Colonic mucosa (tissue), 4 donors: ENCODE measurements at regions of chr4 and their contacts with region 1.

Region 1: DNA sequence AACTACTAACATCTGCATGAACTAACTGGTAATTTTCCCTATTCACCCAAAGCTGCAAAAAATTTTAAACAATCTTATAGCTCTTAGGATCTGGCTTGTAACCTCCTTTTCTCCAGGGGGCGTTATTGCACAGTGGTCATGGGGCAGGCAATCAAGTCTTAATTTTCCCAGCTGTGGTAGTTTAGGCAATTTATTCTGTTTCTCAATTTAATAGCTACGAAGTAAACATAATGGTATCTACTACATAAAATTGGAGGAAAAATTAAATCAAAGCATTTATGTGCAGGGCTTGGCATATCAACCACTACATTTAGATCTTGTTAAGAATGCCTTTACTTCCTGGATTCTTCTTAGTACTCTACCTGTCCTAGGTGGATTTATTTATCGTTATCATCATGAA is 137.4 kb upstream of the GUCY1A1 start:
- DNase-seq: no peak
- H3K4me3 ChIP-seq: no peak overlapping the region
- H3K27ac ChIP-seq: no peak overlapping the region
- H3K4me1 ChIP-seq: no peaks in the 10 kb centered on the region
- H3K27me3 ChIP-seq: no peaks in the 10 kb centered on the region
- CTCF ChIP-seq: no peak

Region 2: GRCh38 chr4:155433636-155434360 is 95.5 kb before region 1 on chr4:
- intact Hi-C with region 1: no loop called
- DNase-seq: no peak
- H3K4me3 ChIP-seq: no peak overlapping the region
- H3K27ac ChIP-seq: no peak overlapping the region
- H3K4me1 ChIP-seq: no peaks in the 10 kb centered on the region
- H3K27me3 ChIP-seq: no peaks in the 10 kb centered on the region
- CTCF ChIP-seq: no peak

Region 3: DNA sequence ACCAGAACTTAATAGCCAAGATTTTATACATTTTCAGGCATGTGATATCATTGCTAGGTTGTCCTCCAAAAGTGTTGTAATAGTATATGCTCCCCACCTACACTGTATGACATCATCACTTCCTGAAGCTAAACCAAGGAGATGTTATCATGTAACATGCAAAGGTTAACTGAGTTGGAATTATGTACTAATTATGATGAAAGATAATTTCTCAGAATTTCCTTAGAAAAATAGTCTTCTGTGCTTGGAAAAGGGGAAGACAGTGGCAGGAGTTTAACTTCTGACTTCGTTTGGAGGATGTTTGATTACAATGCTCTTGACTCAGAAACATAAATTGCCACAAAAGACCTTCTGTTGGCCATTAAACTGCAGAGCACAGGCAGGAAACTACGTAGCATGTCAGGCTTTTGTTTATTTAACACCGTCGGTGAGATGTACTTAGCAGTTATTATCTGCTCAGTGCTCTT is 53.7 kb after region 1 on chr4:
- intact Hi-C with region 1: loop called (anchors 10 kb)
- DNase-seq: no peak
- H3K4me3 ChIP-seq: no peak overlapping the region
- H3K27ac ChIP-seq: peak overlapping the region; percentile 9
- H3K4me1 ChIP-seq: no peaks in the 10 kb centered on the region
- H3K27me3 ChIP-seq: no peaks in the 10 kb centered on the region
- CTCF ChIP-seq: no peak